Naive thymus-derived CD8-positive, alpha-beta T cell (primary cell): ENCODE measurements at regions of chr5 and their contacts with region 1.

Region 1: GRCh38 chr5:69166686-69167492 is at the start of gene CCNB1:
- DNase-seq: peak; percentile 91 to 98 (median 96)
- ATAC-seq: peak; percentile 98 to 99
- H3K4me3 Mint-ChIP-seq: peak within 1 kb of the TSS; percentile 90 to 97 (median 94)
- H3K27ac Mint-ChIP-seq: peak within 1 kb of the TSS; percentile 49 to 94 (median 92)
- H3K4me1 Mint-ChIP-seq: peaks cover 7 to 28% (median 26%) of the 10 kb centered on the region in 4 donors
- H3K27me3 Mint-ChIP-seq: no peaks in the 10 kb centered on the region
- polyA plus RNA-seq, gene CCNB1: 1.7 to 3.0 (median 2.2) TPM

Region 2: DNA sequence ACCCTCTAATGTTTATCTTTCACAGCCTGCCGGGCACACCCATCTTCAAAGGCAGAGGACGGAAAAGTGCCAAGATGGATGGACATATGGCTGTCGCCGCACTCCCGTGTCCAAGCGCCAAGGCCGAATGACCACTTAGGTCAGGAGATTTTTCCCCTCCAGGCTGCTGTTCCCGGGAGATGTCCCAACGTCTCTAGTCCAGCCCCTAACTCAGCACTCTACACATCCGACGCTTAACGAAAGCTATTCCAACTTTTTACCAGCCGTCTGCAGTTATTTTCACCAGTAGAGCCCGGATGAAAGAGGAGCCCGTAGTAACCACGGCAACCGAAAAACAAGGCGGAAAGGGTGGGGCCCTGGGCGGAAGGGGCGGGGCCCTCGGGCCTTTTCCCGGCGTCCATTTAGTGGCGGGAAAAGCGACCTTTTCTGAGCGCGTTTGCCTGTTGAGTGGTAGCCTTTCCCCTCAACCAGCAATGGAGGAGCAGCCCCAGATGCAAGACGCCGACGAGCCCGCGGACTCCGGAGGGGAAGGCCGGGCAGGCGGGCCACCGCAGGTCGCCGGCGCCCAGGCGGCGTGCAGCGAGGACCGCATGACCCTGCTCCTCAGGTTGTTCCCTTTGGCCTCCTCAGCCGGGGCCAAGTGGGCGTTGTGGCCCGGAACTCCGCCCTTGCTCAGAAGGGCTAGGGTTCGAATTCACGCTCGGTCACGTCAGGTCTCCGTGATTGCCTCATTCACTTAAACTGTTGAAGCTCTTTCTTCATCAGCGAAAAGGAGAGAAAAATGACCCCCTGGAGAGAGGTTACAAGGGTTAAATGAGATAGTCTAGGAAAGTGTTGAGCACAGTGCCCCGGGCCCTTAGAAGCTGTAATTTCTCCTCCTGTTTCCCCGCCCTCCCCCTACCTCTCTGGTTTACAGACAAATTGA is 22.5 kb after region 1 on chr5 and contains the start of gene CENPH:
- POLR2A ChIA-PET with region 1: interaction called, 12 read pairs
- DNase-seq: peak; percentile 83 to 96 (median 91)
- ATAC-seq: peak; percentile 91 to 95
- H3K4me3 Mint-ChIP-seq: peak within 1 kb of the TSS; percentile 86 to 94 (median 90)
- H3K27ac Mint-ChIP-seq: peak within 1 kb of the TSS; percentile 86 to 98 (median 95)
- H3K4me1 Mint-ChIP-seq: peaks cover 7 to 20% (median 15%) of the 10 kb centered on the region in 4 donors
- H3K27me3 Mint-ChIP-seq: no peaks in the 10 kb centered on the region
- polyA plus RNA-seq, gene CENPH: 8.2 to 10.7 (median 10.1) TPM